HAP-1 (cell line): ENCODE measurements at regions of chr1 and their contacts with region 1.

Region 1: GRCh38 chr1:50368179-50369012 is 54.8 kb downstream of the DMRTA2 start:
- DNase-seq: peak; percentile 48 to 76
- H3K4me3 ChIP-seq: no peak overlapping the region
- H3K4me1 ChIP-seq: no peaks in the 10 kb centered on the region
- H3K27me3 ChIP-seq: peaks cover 21% of the 10 kb centered on the region

Region 2: DNA sequence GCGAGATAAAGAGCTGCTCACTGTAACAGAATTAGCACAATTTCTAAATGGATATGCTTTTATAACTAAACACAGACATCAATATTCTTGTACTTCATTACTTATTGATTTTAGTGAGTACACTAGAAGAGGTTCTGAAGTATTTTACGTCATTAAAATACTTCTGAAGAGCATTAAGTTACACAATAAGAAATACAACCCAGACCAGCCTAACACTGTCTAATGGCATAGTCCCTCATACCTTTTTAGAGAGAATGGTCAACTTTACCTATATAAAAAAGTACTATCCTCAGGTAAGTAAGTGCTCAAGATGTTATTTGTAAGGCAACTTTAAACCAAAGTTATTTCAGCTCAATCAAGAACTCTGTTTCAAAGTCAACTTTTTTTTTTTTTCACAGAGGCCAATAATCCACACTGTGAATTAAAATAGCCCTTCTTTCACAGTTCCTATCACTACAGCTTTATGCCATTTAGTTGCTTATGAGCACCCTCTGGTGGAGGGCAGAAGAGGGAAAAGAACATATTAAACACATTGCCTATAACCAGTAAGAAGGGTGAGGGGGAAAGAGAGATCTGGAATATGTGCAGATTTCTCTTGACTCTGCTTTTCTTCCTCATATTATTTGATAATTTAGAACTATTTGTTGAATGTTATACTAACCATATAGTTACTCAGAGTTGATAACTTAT is 236.9 kb after region 1 on chr1:
- in situ Hi-C with region 1: loop called (anchors 10 kb)
- DNase-seq: peak; percentile 44 to 63
- H3K4me3 ChIP-seq: no peak overlapping the region
- H3K4me1 ChIP-seq: peaks cover 1% of the 10 kb centered on the region
- H3K27me3 ChIP-seq: no peaks in the 10 kb centered on the region

Region 3: GRCh38 chr1:50710093-50710492 is 341.7 kb after region 1 on chr1:
- in situ Hi-C with region 1: loop called (anchors 10 kb)
- DNase-seq: no peak
- H3K4me3 ChIP-seq: no peak overlapping the region
- H3K4me1 ChIP-seq: no peaks in the 10 kb centered on the region
- H3K27me3 ChIP-seq: no peaks in the 10 kb centered on the region

Region 4: DNA sequence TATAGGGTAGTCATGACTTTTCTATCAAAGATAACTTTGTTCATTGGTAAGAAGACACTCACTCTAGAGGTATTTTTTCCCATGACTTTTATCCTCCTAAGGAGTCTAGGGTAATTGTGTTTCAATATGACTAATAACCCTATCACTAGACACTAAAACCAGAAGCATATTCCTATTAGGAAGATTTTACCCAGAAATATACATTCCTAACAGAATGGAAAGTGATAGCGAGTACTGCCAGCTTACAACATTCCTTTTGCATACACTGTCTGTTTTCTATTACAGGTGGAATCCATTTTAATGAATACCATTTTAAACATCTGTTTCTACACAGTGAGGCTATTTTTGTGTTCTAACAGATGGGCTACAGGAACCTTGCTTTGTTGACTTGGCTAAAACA is 702.2 kb after region 1 on chr1:
- in situ Hi-C with region 1: no loop called
- DNase-seq: no peak
- H3K4me3 ChIP-seq: no peak overlapping the region
- H3K4me1 ChIP-seq: peaks cover 13% of the 10 kb centered on the region
- H3K27me3 ChIP-seq: peaks cover 6% of the 10 kb centered on the region